ENCODE measurements at regions of chr16 and their contacts with region 1.

Region 1: DNA sequence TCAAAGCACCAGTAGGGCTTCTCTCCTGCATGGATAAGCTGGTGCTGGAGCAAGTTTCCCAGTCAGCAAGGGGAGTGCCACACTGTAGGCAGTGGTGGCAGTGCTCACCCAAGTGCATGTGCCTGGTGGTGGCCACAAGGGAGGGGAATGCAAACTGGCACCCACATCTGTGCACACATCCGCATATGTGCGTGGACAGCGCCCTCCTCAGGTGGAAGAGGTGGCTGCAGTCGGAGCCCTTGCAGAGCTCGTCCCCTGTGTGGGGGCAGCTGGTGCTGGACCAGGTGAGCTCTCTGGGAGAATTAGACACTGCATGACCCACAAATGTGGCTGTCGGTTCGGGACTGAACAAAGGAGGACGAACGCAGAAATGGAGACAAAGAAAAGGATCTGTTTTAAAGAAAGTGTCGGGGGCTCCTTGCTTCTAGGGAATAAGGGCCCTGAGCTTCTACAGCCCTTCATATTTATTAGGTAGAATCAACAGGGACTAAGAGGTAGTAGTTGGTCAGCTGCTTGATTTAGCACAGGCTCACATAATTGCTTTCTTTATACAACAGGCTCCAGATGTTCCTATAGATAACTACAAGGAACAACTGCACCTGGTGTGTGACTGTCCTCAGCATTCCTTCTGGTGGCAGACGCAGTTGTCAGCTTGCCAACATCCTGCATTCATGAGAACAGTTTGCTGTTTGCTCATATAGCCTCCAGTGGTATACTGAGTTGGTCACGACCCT is 5.3 kb upstream of the ZNF689 start:
- DNase-seq: peak; percentile 83

Region 2: GRCh38 chr16:30445408-30446202 is 169.9 kb before region 1 on chr16 and contains the start of gene SEPHS2:
- CTCF ChIA-PET with region 1: interaction called, 13 read pairs
- POLR2A ChIA-PET with region 1: interaction called, 7 read pairs
- DNase-seq: peak; percentile 98

Region 3: GRCh38 chr16:30602616-30603277 is 12.8 kb before region 1 on chr16:
- CTCF ChIA-PET with region 1: interaction called, 11 read pairs
- POLR2A ChIA-PET with region 1: interaction called, 25 read pairs
- DNase-seq: no peak

Region 4: DNA sequence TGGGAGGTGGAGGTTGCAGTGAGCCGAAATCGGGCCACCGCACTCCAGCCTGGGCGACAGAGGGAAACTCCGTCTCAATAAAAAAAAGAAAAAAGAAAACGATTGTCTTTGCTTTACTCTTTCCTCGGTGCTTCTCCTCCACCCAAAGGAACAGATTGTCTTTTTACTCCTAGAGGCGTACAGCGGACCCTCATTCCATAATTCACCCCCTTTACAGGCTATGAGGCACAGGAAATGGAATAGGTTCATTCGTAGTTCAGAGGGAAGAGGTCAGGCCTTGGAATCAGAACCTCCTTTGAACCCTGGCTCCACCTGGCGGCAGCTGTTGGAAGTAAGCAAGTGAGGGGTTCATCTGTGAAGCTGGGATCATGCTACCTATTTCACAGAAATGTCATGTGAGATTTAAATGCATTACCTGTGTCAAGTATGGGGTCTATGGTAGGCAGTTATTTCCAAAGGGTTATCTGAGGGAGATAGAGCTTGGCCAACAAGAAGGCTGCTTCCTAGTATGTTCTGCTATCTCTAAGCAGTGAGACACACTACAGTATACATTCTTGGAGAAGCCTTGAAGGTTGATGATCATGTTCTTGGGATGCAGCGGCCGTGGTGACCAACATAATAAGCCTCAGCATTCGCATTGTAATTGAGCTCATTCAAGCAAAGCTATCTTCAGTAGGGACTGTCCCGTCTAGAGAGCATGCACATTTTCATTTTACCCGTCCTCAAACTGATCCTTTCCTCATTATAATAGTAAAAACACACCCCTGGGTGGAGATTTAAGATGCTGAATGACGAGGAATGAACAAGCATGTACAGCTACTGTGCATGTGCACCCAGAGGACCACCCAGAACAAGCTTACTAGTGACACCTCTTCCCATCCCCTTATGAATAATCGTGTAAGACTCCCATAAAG is 13.4 kb after region 1 on chr16:
- CTCF ChIA-PET with region 1: interaction called, 15 read pairs
- POLR2A ChIA-PET with region 1: interaction called, 19 read pairs
- DNase-seq: peak; percentile 90